ENCODE measurements at regions of chr17 and their contacts with region 1.

Region 1: GRCh38 chr17:29617125-29617480 is 5.6 kb downstream of the CORO6 start:
- DNase-seq: peak; percentile 91

Region 2: DNA sequence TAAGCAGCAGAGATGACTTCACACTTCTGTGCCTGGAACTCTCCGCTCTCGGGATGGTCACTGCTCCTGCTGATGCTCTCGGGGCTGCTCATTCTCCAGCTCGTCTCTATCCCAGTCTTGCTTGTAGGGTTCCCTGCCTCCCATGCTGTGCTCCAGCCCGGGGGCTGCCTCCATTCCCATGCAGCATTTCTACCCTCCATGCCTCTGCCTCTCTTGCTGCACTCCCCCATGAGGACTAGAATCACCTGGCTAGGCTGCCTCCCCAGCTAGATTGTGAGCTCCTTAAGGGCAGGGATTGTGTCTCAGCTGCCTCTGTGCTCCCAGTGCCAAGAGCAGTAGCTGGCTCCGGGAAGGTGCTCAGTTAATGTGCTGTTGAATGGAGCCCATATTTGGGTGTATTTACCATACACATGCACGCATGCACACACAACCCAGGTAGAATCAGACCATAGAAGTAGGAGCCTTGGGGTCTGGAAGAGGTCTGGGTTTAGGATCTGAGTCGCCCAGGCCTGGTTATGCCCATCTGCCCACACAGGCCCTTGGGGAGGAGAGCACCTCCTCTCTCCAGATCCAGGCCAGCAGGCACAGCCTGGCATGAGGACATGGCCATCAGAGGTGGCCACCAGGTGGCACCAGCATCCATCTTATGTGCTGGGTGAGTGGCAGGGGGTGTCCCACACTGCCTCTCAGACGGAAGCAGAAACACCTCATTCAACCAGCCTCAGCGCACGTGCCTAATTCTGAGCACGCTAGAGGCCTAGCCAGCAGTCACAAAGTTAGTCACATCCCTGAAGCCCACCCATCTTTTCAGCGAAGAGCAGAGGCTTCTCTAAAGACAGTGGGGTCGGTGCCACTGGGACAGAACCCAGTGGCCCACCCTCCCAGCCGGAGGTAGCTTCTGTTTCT is 37.0 kb before region 1 on chr17:
- intact Hi-C with region 1: loop called (anchors 5 kb)
- DNase-seq: peak; percentile 90

Region 3: DNA sequence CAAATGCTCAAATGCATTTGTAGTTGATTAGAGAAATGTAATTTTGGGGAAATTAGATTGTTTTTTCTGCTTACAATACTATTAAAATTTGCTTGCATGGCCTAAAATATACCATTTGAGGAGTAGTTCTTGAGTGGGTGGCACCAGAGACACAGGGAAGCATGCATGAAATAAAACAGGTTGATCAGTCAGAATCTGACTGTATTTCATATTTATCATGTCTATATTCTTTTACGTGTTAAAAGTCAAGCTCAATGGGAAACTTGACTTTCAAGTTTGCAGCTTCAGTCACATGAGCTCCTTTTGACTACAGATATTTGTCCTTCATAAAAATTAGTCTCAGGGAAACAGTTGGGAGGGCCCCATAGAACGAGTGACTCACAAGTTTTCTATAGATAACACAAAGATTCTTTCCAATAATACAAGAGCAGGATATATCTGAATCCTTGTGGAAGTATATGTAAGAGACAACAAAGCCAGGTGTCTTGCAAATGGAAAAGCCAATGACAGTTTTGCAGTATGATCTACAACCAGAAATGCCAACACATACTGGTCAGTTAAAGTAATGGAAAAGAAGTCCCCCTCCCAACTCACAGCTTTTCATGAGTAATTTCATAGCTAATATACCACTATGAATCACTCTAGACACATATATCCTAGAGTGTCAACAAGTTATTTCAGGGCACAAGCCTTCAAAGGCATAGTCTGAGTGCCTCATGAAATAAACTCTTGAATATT is 47.8 kb after region 1 on chr17:
- intact Hi-C with region 1: no loop called
- DNase-seq: no peak

Region 4: GRCh38 chr17:29777663-29778062 is 160.6 kb after region 1 on chr17:
- intact Hi-C with region 1: loop called (anchors 5 kb)
- DNase-seq: no peak